ENCODE measurements at regions of chr2 and their contacts with region 1.

Region 1: DNA sequence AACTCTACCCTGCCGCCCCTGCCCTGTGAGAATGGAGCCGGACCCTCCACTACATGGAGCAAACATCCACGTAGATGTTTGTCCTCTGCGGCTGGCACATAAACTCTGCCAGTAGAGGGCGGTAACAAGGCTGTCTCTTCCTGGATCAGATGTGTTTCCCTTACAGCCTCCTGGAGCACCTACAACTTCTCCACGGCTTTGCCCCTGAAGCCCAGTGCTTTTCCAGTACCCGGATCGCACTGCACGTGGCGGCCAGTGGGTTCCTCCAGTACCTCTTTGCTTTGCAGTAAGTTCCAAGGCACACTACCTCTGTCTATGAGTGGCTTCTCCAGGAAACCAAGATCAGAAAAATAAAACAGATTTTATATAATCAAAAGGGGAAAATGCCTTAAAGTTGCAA is 651.3 kb downstream of the DCDC2C start:
- DNase-seq: peak; percentile 52
- H3K4me3 ChIP-seq: no peak overlapping the region
- H3K27ac ChIP-seq: no peak overlapping the region
- H3K4me1 ChIP-seq: no peaks in the 10 kb centered on the region
- CTCF ChIP-seq: peak; percentile 83

Region 2: GRCh38 chr2:3838348-3838747 is 516.3 kb before region 1 on chr2:
- CTCF ChIA-PET with region 1: no interaction called
- POLR2A ChIA-PET with region 1: no interaction called
- intact Hi-C with region 1: no loop called
- DNase-seq: no peak
- H3K4me3 ChIP-seq: no peak overlapping the region
- H3K27ac ChIP-seq: no peak overlapping the region
- H3K4me1 ChIP-seq: no peaks in the 10 kb centered on the region
- CTCF ChIP-seq: no peak

Region 3: GRCh38 chr2:4122726-4123125 is 232.0 kb before region 1 on chr2:
- CTCF ChIA-PET with region 1: no interaction called
- POLR2A ChIA-PET with region 1: no interaction called
- intact Hi-C with region 1: loop called (anchors 10 kb)
- DNase-seq: no peak
- H3K4me3 ChIP-seq: no peak overlapping the region
- H3K27ac ChIP-seq: no peak overlapping the region
- H3K4me1 ChIP-seq: no peaks in the 10 kb centered on the region
- CTCF ChIP-seq: no peak

Region 4: DNA sequence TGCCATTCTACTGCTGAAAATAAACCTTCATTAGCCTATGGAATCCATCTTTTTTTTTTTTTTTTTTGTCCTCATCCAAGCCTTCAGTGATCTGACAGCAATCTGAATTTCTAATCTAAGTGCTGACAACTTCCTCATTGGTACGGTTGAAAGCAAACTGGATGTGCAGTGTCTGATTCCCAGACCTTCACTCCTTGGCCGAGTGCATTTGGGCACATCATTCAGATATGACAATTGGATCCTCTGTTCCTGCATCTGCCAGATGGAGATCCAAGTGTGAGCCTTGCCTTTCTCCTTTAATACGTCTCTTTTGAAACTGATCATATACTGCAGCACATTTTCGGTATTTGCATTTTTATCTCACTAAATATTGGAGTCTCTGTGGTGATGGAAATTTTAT is 61.8 kb after region 1 on chr2:
- CTCF ChIA-PET with region 1: no interaction called
- POLR2A ChIA-PET with region 1: no interaction called
- intact Hi-C with region 1: no loop called
- DNase-seq: no peak
- H3K4me3 ChIP-seq: no peak overlapping the region
- H3K27ac ChIP-seq: no peak overlapping the region
- H3K4me1 ChIP-seq: no peaks in the 10 kb centered on the region
- CTCF ChIP-seq: no peak

Region 5: GRCh38 chr2:4762951-4763376 is 408.3 kb after region 1 on chr2:
- CTCF ChIA-PET with region 1: no interaction called
- POLR2A ChIA-PET with region 1: no interaction called
- intact Hi-C with region 1: loop called (anchors 10 kb)
- DNase-seq: peak; percentile 55
- H3K4me3 ChIP-seq: no peak overlapping the region
- H3K27ac ChIP-seq: no peak overlapping the region
- H3K4me1 ChIP-seq: no peaks in the 10 kb centered on the region
- CTCF ChIP-seq: peak; percentile 86